Activated CD8-positive, alpha-beta memory T cell treated with anti-CD3 and anti-CD28 coated beads, Interleukin-2, amount 10 ng/mL, durations not matched to agents 7 days and 5 days (primary cell): ENCODE measurements at regions of chr16 and their contacts with region 1.

Region 1: GRCh38 chr16:58487566-58488351 is 12.2 kb upstream of the NDRG4 start:
- DNase-seq: peak; percentile 78
- ATAC-seq: peak; percentile 90
- H3K4me3 Mint-ChIP-seq: no peak overlapping the region
- H3K27ac Mint-ChIP-seq: no peak overlapping the region
- H3K4me1 Mint-ChIP-seq: no peaks in the 10 kb centered on the region
- H3K27me3 Mint-ChIP-seq: peaks cover 9% of the 10 kb centered on the region

Region 2: DNA sequence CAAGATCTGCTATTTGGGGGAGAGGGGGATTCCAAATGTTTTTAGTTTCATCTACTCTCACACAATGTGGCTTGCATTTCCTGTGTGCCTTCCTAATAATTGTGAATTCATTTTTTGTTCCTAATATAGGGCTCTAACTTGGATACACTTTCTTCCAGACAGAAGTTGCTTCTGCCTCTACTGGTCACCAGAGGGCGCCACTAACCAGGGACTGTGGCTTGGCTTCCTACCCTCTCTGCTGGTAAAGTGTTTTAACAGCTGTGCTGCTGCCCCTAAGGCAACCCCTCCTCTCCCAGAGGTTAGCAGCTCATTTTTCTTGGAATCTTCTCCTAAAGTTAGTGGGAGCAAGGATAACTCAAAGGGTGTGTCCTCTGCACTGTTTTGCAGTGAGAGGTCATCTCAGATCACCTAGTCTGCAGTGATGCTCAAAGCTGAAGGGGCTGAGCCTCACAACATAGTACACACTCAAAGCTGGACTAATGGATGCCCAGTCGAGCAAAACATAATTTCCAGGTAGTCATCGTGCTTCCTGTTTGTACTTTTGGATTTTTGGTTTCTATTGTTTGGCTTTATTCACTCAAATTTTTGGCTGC is 187.9 kb before region 1 on chr16:
- CTCF ChIA-PET with region 1: interaction called, 11 read pairs
- DNase-seq: peak; percentile 49
- ATAC-seq: no peak
- H3K4me3 Mint-ChIP-seq: no peak overlapping the region
- H3K27ac Mint-ChIP-seq: no peak overlapping the region
- H3K4me1 Mint-ChIP-seq: no peaks in the 10 kb centered on the region
- H3K27me3 Mint-ChIP-seq: peaks cover 26% of the 10 kb centered on the region

Region 3: DNA sequence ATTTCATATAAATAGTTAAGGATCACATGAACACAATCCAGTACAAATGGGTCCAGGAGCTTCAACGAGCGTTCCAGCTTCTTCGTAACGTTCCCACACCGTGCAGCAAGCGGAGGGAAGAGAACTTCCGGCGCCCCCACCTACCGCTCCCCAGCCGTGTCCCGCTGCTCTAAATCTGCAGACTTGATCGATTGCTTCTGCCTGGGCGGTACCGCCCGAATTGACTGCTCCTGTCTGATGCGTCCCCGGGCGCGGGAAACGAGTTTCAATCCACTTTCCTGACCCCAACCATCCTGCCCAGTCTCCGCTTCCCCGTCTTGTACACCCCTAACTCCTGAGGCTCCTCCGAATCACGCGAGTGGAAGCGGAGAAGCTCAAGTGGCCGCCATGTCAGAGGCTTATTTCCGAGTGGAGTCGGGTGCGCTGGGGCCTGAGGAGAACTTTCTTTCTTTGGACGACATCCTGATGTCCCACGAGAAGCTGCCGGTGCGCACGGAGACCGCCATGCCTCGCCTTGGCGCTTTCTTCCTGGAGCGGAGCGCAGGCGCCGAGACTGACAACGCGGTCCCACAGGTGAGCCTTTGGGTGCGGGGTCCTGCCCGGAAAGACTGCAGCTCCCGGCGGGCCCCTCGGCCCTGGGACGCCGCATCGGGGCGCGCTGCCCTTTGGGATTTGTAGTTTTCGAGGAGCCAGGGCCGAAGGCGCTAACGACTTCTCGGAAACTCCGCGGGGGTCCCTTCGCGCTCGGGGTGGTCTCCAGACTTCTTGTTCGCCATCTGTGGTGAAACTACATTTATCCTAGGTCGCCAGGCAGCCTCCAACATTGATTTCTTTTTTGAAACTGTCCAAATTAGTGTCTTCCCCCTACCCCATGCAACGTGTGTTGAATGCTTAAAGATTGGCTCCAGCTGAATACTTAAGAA is 95.3 kb before region 1 on chr16 and contains the start of gene GINS3:
- CTCF ChIA-PET with region 1: interaction called, 15 read pairs
- DNase-seq: peak; percentile 92
- ATAC-seq: peak; percentile 97
- H3K4me3 Mint-ChIP-seq: peak within 1 kb of the TSS; percentile 100
- H3K27ac Mint-ChIP-seq: peak within 1 kb of the TSS; percentile 100
- H3K4me1 Mint-ChIP-seq: peaks cover 21% of the 10 kb centered on the region
- H3K27me3 Mint-ChIP-seq: peaks cover 4% of the 10 kb centered on the region
- total RNA-seq, gene GINS3: 15.6 to 19.2 TPM

Region 4: DNA sequence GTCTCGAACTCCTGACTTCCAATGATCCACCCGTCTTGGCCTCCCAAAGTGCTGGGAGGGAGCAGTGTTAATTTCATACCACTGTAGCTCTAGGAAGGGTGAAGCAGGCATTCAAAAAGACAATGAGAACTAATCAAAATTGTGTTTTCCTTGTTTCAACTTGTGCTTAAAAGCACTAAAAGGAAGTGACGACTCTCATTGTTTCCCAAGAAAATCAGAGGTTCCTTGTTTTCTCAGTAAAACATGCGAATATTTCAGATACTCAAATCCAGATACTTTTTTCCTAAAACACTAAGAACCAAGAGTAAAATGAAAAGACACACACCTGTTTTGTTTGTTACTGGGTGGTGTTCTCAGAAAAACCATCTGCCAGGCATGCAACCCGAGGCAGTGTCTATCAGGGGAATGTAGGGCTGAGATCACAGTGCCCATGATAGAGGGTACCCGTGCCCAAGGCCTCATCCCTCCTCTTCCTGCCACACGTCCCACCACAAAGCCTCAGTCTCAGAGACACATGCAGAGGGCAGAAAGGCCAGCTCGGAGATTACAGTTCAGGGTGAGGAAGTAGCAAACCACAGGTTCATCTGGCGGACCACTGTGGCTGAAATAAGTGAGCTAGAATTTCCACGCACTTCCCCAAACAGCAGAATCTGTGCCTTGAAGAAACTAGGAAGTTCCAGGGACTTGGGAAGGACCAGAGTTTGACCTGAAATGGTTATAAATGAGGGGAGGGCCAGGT is 61.8 kb before region 1 on chr16:
- CTCF ChIA-PET with region 1: interaction called, 10 read pairs
- DNase-seq: peak; percentile 74
- ATAC-seq: peak; percentile 86
- H3K4me3 Mint-ChIP-seq: no peak overlapping the region
- H3K27ac Mint-ChIP-seq: peak overlapping the region; percentile 37
- H3K4me1 Mint-ChIP-seq: peaks cover 25% of the 10 kb centered on the region
- H3K27me3 Mint-ChIP-seq: peaks cover 35% of the 10 kb centered on the region

Region 5: DNA sequence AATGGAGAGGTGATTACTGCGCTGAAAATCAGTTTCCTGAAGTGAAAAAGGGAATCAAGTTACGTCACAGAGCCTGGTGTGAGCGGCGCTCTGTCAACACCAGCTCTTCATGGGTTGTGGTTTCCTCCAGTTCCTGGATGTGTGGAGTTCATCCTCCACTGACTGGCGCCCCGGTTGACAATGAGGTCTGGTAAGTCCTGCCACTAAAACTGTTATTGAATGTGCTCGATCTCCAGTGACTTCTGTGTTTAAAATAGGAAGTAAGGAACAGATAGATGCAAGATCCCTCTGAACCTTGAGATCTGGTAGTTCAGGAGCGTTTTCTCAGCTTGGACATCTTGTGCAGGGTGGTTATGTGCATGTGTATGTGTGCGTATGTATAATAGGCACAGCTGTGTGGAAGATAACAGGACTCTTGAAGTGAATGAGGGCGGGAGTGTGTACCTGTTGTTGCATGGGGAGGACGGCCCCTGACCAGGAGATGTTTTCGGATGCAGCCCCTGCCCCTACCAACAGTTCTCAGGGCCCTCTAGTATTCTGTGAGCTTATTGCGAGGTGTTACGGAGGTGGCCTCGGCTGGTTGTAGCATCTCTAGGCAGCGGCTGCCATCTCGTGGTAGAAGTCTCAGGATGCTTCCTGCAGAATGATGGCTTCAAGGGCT is 268.4 kb after region 1 on chr16:
- CTCF ChIA-PET with region 1: interaction called, 14 read pairs
- DNase-seq: peak; percentile 87
- ATAC-seq: peak; percentile 97
- H3K4me3 Mint-ChIP-seq: peak overlapping the region; percentile 6
- H3K27ac Mint-ChIP-seq: no peak overlapping the region
- H3K4me1 Mint-ChIP-seq: peaks cover 10% of the 10 kb centered on the region
- H3K27me3 Mint-ChIP-seq: peaks cover 8% of the 10 kb centered on the region